GM10248 (cell line): ENCODE measurements at regions of chr12 and their contacts with region 1.

Region 1: DNA sequence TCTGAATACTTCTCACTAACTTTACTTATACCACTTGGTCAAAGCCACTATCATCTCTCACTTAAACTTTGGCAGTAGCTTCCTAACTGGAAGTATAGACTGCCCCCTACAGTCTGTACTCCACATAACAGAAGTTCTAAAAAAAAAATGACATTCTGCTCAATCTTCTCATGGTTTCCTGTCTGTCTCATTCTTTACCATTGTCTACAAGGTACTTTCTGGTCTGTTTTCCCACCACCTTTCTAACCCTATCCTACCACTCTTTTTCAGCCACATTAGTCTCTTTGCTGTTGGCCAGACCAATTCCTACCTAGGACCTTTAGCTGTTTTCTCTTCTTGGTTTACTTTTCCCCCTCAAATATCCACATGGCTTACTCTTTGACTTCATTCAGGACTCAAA is 14.7 kb downstream of the CPSF6 start:
- DNase-seq: peak; percentile 49
- CTCF ChIP-seq: peak; percentile 63

Region 2: GRCh38 chr12:69240631-69240995 is 13.4 kb before region 1 on chr12:
- CTCF ChIA-PET with region 1: interaction called, 47 read pairs
- POLR2A ChIA-PET with region 1: interaction called, 5 read pairs
- DNase-seq: peak; percentile 21
- CTCF ChIP-seq: no peak

Region 3: DNA sequence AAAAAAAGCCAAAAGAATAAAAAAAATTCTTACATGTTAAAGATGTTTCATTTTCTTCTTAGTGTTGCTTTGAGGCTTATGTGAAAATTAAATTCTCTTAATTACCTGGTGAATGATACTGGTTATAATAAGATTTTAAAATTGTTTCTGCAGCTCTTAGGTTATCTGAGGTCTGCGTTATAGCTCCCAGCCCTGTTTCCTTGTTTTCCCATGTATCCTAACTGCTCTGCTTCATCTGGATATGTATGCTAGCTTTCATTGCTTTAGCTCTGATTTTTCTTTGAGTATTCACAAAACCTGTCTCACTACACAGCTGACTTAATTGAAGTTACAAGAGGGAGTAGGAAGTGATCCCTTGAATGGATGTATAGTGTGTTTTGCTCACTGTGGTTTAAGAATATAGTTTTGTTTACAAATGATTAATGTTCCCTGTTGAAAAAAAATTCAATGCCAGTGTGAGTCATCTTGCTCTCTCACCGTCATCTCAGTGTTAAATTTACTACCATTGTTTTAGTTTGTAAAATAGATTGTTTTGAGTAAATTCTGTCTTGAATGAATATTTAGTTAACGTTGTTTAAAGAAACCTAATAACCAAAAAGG is 12.1 kb after region 1 on chr12:
- CTCF ChIA-PET with region 1: interaction called, 24 read pairs
- POLR2A ChIA-PET with region 1: no interaction called
- DNase-seq: no peak
- CTCF ChIP-seq: no peak